ENCODE measurements at regions of chr7 and their contacts with region 1.

Region 1: DNA sequence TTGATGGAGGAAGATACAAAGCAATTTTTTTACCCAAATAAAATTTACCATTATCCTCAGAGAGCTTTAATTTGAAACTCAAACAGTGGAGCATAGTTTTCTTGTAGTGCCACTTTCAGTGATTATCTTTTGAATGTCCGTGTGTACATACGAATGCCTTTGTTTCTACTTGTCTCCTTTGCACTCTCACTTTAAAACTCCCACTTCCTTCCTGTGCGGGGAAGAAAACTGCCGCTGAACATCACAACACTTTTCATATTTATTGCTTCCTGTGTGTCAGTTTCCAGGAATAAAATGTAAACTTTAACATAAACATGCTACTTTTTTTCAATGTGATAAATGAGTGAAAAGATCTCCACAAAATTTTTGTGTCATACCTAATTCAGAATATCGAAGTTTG is 102.4 kb downstream of the SEMA3A start:
- DNase-seq: peak; percentile 86
- H3K4me3 ChIP-seq: peak overlapping the region; percentile 9
- H3K27ac ChIP-seq: peak overlapping the region; percentile 71
- H3K4me1 ChIP-seq: peaks cover 42% of the 10 kb centered on the region
- H3K27me3 ChIP-seq: no peaks in the 10 kb centered on the region
- CTCF ChIP-seq: no peak

Region 2: DNA sequence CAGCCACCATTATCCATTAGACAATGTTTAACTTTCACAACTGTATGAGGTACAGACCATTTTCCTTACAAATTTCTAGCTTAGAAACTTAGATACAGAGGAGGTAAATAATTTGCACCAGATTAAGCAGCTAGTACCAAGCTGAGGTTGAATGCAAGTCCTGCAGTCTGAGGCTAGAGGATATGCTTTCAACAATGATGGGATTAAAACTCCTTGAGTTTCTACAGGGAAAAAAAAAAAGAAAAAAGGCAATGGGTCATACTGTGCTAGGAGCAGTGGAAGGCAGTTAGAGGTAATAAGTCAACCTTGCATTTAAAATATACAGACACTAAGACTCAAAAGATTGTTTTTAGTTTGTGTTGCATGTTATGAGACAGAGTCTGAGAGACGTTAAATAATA is 15.9 kb after region 1 on chr7:
- CTCF ChIA-PET with region 1: no interaction called
- POLR2A ChIA-PET with region 1: no interaction called
- intact Hi-C with region 1: loop called (anchors 2 kb)
- DNase-seq: no peak
- H3K4me3 ChIP-seq: no peak overlapping the region
- H3K27ac ChIP-seq: no peak overlapping the region
- H3K4me1 ChIP-seq: peaks cover 77% of the 10 kb centered on the region
- H3K27me3 ChIP-seq: no peaks in the 10 kb centered on the region
- CTCF ChIP-seq: no peak